GM13977 (cell line): ENCODE measurements at regions of chr6 and their contacts with region 1.

Region 1: GRCh38 chr6:138765896-138766655 is 7.5 kb upstream of the CCDC28A start:
- DNase-seq: peak; percentile 46
- CTCF ChIP-seq: peak; percentile 63

Region 2: GRCh38 chr6:138328210-138328609 is 437.9 kb before region 1 on chr6:
- in situ Hi-C with region 1: no loop called
- DNase-seq: no peak
- CTCF ChIP-seq: no peak

Region 3: DNA sequence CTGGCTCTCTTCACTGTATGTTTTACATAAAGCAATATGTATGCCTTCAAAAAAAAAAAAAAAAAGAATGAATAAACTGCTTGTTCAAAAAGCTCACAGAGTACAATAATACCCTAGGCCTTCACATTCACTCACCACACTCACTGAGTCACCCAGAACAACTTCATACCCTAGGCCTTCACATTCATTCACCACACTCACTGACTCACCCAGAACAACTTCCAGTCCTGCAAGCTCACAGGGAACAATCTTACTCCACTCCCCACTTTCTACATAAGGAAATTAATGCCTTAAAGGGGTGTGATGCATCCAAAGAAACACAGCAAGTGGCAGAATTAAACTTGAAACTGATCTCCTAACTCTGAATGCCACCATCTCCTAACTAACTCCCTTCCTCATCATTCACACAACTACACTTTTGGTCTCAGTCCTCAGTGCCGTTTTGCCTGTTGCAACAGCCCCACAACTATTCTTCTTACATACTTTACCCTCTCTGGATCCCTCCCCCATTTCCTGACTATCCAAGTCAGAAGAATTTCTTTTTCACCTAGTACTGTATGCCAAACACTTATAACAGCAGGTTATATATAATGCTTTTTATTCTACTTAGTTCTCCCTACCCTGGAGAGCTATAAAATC is 300.9 kb before region 1 on chr6:
- in situ Hi-C with region 1: no loop called
- DNase-seq: no peak
- CTCF ChIP-seq: no peak

Region 4: GRCh38 chr6:138588805-138589434 is 177.2 kb before region 1 on chr6:
- in situ Hi-C with region 1: loop called (anchors 5 kb)
- DNase-seq: peak; percentile 65
- CTCF ChIP-seq: peak; percentile 95